Calu3 (cell line): ENCODE measurements at regions of chr5 and their contacts with region 1.

Region 1: DNA sequence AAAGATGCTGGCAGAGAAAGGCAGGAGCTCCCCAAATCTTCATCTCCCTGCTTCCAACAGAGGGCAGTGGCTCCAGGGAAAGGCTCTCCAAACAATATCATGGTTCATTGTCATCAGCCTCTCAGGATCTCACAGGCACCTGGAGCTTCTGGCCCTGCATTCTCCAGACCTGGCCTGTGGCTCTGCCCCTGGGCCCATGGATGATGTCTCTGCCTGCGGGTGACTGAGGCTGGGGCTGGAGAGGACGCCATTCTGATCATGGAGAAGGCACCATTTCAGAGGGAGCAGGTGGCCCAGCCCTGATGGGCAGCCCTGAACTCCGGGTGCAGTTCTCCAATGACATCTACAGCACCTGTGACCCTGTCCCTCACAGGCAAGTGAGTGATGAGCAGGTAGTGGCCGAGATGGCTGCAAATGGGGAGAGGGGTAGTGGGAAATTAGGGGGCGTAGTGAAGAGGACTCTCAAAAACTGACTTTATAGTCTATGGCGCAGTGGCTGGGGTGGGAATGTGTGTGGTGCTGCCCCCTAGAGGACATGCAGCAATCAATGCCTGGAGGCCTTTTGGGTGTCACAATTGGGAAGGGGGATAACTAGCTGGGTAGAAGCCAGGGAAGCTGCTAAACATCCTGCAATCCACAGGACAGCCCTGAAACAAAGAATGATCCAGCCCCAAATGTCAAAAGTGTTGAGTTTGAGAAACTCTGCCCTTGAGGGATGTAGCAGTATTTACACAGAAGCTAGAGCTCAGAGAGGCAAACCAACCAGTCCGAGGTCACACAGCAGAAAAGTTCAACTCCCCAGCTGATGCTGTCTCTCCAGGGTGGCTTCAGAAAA is 3.2 kb downstream of the SH3PXD2B start:
- DNase-seq: peak; percentile 63
- H3K4me3 Mint-ChIP-seq: no peak overlapping the region
- H3K27ac Mint-ChIP-seq: peak overlapping the region; percentile 61
- H3K4me1 Mint-ChIP-seq: peaks cover 31% of the 10 kb centered on the region
- H3K27me3 Mint-ChIP-seq: no peaks in the 10 kb centered on the region
- CTCF ChIP-seq: peak; percentile 72

Region 2: DNA sequence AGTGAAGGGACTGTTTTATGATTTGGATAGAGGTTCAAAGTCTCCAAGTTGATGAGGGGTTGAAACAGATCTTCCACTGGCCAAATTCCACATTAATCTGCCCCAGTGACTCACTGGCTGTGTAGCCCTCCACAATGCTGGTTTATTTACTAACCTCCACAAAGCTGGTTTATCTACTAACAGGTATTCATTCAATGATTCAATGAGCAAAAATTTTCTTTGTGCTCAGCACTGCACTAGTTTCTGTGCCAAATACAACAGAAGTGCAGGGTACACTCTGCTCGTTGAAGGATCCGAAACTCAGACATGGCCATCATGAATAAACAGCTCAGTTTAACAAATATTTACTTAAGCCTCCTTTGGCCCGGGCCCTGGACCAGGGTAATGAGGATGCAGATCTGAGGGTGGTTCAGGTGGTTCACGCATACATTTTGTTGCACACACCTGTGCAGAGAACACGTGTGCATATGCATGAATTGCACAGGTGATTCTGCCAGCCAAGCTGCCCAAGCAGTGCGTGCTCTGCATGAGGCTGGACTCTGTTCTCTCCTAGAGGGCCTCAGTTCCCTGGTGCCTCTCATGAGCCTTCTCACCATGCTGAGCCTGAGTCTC is 67.8 kb before region 1 on chr5:
- CTCF ChIA-PET with region 1: interaction called, 9 read pairs
- intact Hi-C with region 1: loop called (anchors 1 kb)
- DNase-seq: peak; percentile 62
- H3K4me3 Mint-ChIP-seq: no peak overlapping the region
- H3K27ac Mint-ChIP-seq: peak overlapping the region; percentile 36
- H3K4me1 Mint-ChIP-seq: peaks cover 35% of the 10 kb centered on the region
- H3K27me3 Mint-ChIP-seq: no peaks in the 10 kb centered on the region
- CTCF ChIP-seq: no peak

Region 3: GRCh38 chr5:172420240-172420943 is 30.7 kb before region 1 on chr5:
- CTCF ChIA-PET with region 1: interaction called, 4 read pairs
- intact Hi-C with region 1: loop called (anchors 2 kb)
- DNase-seq: peak; percentile 95
- H3K4me3 Mint-ChIP-seq: peak overlapping the region; percentile 69
- H3K27ac Mint-ChIP-seq: peak overlapping the region; percentile 91
- H3K4me1 Mint-ChIP-seq: peaks cover 21% of the 10 kb centered on the region
- H3K27me3 Mint-ChIP-seq: no peaks in the 10 kb centered on the region
- CTCF ChIP-seq: no peak

Region 4: DNA sequence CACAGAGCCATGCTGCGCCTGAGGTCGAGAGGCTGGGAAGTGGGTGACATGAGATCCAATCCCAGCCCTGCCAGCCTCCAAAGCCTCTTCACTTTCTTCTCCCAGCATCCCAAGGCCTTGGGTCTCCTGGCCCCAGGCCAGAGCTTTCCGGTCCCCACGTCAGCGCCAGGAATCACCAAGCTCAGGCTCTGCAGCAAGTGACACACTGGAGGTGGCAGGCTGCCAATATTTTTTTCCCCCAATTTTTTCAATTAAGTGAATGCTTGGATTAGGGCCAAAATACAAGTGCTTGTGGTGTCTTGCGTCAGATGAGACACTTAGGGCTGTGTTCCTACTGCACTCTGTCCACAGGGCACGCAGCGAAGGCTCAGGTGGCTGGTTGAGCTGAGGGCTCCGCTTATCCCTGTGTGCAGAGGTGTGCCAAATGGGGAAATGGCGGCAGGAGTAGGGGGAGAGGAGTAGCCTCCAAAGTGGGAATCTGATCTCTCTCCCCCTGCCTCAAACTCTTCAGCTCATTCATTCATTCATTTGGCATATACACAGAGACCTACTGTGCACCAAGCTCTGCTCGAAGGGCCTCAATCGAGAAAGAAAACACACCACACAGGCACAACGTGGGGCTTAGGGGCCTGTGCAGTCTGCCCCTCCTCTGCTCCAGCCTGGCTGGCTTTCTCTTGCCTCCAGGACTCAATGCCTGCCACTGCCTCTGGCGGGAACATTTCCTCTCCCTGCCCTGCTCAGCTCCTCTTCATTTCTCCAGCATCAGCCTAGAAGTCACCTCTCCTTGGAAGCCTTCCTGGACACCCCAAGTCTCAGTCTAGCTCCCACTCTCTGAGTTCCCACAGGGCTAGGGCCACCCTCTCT is 13.4 kb before region 1 on chr5:
- CTCF ChIA-PET with region 1: interaction called, 23 read pairs
- intact Hi-C with region 1: loop called (anchors 1 kb)
- DNase-seq: peak; percentile 94
- H3K4me3 Mint-ChIP-seq: peak overlapping the region; percentile 16
- H3K27ac Mint-ChIP-seq: peak overlapping the region; percentile 59
- H3K4me1 Mint-ChIP-seq: peaks cover 20% of the 10 kb centered on the region
- H3K27me3 Mint-ChIP-seq: no peaks in the 10 kb centered on the region
- CTCF ChIP-seq: no peak